CD14-positive monocyte (primary cell): ENCODE measurements at regions of chr5 and their contacts with region 1.

Region 1: DNA sequence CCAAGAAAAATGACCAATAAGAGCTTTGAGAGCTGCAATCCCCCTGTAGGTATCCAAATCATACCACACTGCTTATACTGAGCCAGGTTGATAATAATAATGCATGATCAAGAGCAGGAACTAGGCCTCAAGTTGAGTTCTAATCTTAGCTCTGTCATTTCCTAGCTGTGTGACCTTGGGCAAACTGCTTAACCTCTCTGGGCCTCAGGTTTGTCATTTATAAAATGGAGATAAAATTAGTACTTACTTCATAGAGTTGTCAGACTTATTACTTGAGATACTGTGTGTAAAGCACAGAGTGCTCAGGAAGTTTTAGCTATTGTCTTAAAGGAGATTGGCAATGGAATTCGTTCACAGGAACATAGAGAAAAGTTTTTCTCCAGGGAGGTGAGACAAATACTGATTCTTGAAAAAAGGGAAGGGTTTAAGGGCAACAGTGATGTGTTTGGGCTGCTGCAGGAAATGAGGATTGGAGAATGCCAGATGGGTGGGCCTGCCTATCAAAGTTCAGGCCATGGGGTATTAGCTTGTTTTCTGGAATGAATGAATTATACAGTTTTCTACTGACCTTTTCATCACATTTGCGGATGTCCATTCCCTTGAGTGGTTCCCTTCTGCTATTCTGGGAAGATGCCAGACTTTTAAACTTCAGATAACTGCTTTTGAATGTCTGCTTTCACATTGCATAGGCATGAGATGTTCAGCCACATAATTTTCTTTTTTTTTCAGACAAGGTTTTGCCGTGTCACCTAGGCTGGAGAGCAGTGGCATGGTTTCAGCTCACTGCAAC is 10.2 kb upstream of the ATP6V0E1 start:
- DNase-seq: no peak
- H3K4me3 ChIP-seq: no peak overlapping the region
- H3K4me3 Mint-ChIP-seq: no peak overlapping the region
- H3K27ac ChIP-seq: no peak overlapping the region
- H3K27ac Mint-ChIP-seq: no peak overlapping the region
- H3K4me1 ChIP-seq: peaks cover 21 to 24% of the 10 kb centered on the region in 2 donors
- H3K4me1 Mint-ChIP-seq: peaks cover 19% of the 10 kb centered on the region
- H3K27me3 ChIP-seq: peaks cover 0 to 6% of the 10 kb centered on the region in 2 donors
- H3K27me3 Mint-ChIP-seq: peaks cover 0 to 7% (median 0%) of the 10 kb centered on the region in 3 donors
- CTCF ChIP-seq: no peak

Region 2: DNA sequence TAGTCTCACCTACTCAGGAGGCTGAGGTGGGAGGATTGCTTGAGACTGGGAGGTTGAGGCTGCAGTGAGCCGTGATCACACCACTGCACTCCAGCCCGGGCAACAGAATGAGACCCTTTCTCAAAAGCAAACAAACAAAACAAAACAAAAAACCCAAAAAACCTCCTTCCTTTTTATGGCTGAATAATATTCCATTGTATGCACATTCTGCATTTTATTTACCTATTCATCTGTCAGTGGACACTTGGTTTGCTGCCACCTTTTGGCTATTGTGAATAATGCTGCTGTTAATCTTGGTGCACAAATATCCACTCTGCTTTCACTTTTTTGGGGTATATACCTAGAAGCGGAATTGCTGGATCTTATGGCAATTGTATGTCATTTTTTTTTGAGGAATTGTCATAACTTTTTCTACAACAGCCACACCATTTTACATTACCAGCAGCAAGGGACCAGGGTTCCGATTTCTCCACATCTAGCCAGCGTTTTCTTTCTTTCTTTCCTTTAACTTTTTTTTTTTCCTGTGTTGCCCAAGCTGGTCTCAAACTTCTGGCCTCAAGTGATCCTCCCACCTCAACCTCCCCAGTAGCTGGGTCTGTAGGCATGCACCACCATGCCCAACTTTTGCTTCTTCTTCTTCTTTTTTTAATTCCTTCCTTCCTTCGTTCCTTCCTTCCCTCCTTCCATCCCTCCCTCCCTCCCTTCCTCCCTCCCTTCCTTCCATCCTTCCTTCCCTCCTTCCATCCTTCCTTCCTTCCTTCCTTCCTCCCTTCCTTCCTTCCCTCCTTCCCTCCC is 231.1 kb after region 1 on chr5:
- intact Hi-C with region 1: loop called in 1 of 2 experiments (anchors 10 kb)
- DNase-seq: peak in 2 of 3 donors; percentile 11 to 29
- H3K4me3 ChIP-seq: no peak overlapping the region
- H3K4me3 Mint-ChIP-seq: no peak overlapping the region
- H3K27ac ChIP-seq: no peak overlapping the region
- H3K27ac Mint-ChIP-seq: no peak overlapping the region
- H3K4me1 ChIP-seq: no peaks in the 10 kb centered on the region
- H3K4me1 Mint-ChIP-seq: no peaks in the 10 kb centered on the region
- H3K27me3 ChIP-seq: peaks cover 0 to 22% of the 10 kb centered on the region in 2 donors
- H3K27me3 Mint-ChIP-seq: peaks cover 28 to 58% (median 49%) of the 10 kb centered on the region in 3 donors
- CTCF ChIP-seq: peak; percentile 76